ENCODE measurements at regions of chr4 and their contacts with region 1.

Region 1: GRCh38 chr4:77586951-77587383 is 18.7 kb upstream of the CXCL13 start:
- DNase-seq: peak; percentile 88
- ATAC-seq: peak; percentile 98
- H3K4me3 ChIP-seq: no peak overlapping the region
- H3K27ac ChIP-seq: no peak overlapping the region
- H3K4me1 ChIP-seq: peaks cover 13% of the 10 kb centered on the region
- H3K27me3 ChIP-seq: no peaks in the 10 kb centered on the region
- CTCF ChIP-seq: no peak
- EP300 ChIP-seq: peak; percentile 57 to 81; a peak in 2 of 4 replicates
- POLR2A ChIP-seq: no peak
- RAD21 ChIP-seq: no peak

Region 2: DNA sequence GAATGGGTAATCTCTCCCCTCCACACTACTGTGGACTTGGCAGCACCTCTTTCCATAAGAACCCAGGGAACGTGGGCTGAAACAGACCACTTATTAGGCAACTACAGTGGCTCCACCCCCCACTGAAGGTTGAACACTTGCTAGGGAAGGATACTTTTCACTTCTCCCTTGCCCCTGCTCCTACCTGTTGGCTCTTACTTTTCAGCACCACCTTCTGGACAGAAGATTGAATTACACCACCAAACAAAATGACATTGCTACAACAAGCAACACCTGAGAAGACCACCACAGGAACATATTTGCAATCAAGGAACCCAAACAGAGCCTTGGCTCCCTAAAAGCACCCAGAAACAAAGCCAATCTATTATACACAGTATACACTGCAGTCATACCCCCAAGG is 113.5 kb before region 1 on chr4:
- CTCF ChIA-PET with region 1: interaction called, 10 read pairs
- POLR2A ChIA-PET with region 1: no interaction called
- RAD21 ChIA-PET with region 1: no interaction called
- SMC1A ChIA-PET with region 1: no interaction called
- in situ Hi-C with region 1: no loop called
- intact Hi-C with region 1: no loop called
- DNase-seq: no peak
- ATAC-seq: peak; percentile 59
- H3K4me3 ChIP-seq: no peak overlapping the region
- H3K27ac ChIP-seq: no peak overlapping the region
- H3K4me1 ChIP-seq: no peaks in the 10 kb centered on the region
- H3K27me3 ChIP-seq: no peaks in the 10 kb centered on the region
- CTCF ChIP-seq: peak in 2 of 3 experiments; percentile 32 to 39; a peak in 2 of 6 replicates
- EP300 ChIP-seq: no peak
- POLR2A ChIP-seq: no peak
- RAD21 ChIP-seq: peak; percentile 35

Region 3: GRCh38 chr4:77493120-77493752 is 93.7 kb before region 1 on chr4:
- CTCF ChIA-PET with region 1: interaction called, 4 read pairs
- POLR2A ChIA-PET with region 1: no interaction called
- RAD21 ChIA-PET with region 1: interaction called, 4 read pairs
- SMC1A ChIA-PET with region 1: interaction called, 3 read pairs
- in situ Hi-C with region 1: no loop called
- intact Hi-C with region 1: loop called (anchors 2 kb)
- DNase-seq: peak; percentile 35
- ATAC-seq: peak; percentile 91
- H3K4me3 ChIP-seq: no peak overlapping the region
- H3K27ac ChIP-seq: peak overlapping the region; percentile 35; the same call in 1 of the 2 replicates
- H3K4me1 ChIP-seq: peaks cover 5% of the 10 kb centered on the region; the same call in 1 of the 2 replicates
- H3K27me3 ChIP-seq: no peaks in the 10 kb centered on the region
- CTCF ChIP-seq: no peak
- EP300 ChIP-seq: 0 out of 4 replicates have a peak, but pooled peaks of 1 of the 2 experiments have one; percentile 36
- POLR2A ChIP-seq: no peak
- RAD21 ChIP-seq: no peak

Region 4: DNA sequence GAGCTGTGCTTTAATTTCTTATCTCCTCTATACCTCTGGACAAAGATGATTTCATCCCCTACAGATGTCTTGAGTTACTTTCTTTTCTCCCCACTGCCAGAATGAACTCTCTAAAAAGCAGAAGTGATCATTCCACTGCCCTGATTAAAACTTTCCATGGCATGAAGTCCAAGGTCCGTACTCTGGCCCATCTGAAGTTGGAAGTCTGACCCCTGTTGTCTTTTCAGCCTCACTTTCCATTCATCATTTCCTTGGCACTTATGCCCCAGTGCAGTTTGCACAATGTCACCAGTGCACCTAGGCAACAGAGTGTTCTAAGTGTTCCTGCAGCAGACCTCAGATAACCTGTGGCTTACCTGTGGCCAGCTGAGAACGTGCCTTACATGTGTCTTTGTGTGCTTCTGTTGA is 712.6 kb after region 1 on chr4:
- CTCF ChIA-PET with region 1: no interaction called
- POLR2A ChIA-PET with region 1: no interaction called
- RAD21 ChIA-PET with region 1: no interaction called
- SMC1A ChIA-PET with region 1: no interaction called
- in situ Hi-C with region 1: no loop called
- intact Hi-C with region 1: no loop called
- DNase-seq: peak; percentile 23
- ATAC-seq: peak; percentile 82
- H3K4me3 ChIP-seq: no peak overlapping the region
- H3K27ac ChIP-seq: no peak overlapping the region
- H3K4me1 ChIP-seq: peaks cover 8% of the 10 kb centered on the region; the same call in 1 of the 2 replicates
- H3K27me3 ChIP-seq: no peaks in the 10 kb centered on the region
- CTCF ChIP-seq: no peak
- EP300 ChIP-seq: peak in 1 of 2 experiments; percentile 54; a peak in 1 of 4 replicates
- POLR2A ChIP-seq: no peak
- RAD21 ChIP-seq: no peak